Tibial artery (tissue), 4 donors: ENCODE measurements at regions of chr7 and their contacts with region 1.

Region 1: DNA sequence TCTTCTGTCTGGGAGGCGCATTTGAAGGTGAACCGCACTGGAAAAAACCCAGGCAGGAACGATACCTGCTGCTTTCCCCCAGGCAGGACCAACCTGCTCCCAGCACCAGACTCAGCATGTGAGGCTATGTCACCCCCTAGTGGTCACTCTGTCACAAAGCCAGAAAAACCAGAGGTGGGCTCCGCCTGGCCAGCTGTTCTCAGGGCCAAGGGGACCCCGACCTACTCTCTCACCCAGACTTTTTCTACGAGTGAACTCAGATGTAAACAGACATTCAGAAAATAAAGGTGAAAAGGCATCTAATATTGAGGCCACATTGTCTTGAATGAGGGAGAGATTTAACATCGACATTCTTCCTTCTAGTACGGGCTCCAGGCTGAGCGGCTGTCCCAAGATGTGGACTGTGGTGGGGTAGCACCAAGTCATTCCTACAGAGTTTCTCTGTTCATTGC is 117.3 kb downstream of the PRKAG2 start:
- DNase-seq: peak in 1 of 2 donors; percentile 78
- H3K4me3 ChIP-seq: no peak overlapping the region
- H3K27ac ChIP-seq: no peak overlapping the region
- H3K4me1 ChIP-seq: peaks cover 0 to 51% (median 41%) of the 10 kb centered on the region in 4 donors
- H3K27me3 ChIP-seq: no peaks in the 10 kb centered on the region
- CTCF ChIP-seq: peak; percentile 86 to 90

Region 2: DNA sequence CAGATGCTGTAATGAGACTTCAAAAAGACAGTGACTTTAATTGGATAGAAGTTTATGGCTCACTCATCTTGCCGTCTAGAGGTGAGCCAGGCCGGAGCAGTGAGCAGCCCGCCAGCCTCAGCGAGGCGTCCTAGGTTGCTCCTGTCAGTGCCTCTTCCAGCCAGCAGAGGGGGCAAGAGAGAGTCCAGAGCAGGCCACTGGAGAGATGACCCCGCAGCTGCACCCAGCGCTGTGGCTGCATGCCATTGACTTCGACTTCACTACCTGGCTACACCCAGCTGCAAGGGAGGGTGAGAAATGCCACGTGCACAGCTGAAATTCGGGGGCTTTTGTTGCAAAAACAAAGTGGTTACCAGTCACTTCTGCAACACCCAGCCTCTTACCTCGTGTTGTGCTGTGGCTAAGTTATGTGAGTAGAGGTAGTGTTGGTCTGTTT is 391.5 kb before region 1 on chr7:
- intact Hi-C with region 1: loop called (anchors 10 kb)
- DNase-seq: peak; percentile 78 to 88
- H3K4me3 ChIP-seq: no peak overlapping the region
- H3K27ac ChIP-seq: no peak overlapping the region
- H3K4me1 ChIP-seq: peaks cover 0 to 41% (median 29%) of the 10 kb centered on the region in 4 donors
- H3K27me3 ChIP-seq: no peaks in the 10 kb centered on the region
- CTCF ChIP-seq: peak; percentile 96 to 98

Region 3: DNA sequence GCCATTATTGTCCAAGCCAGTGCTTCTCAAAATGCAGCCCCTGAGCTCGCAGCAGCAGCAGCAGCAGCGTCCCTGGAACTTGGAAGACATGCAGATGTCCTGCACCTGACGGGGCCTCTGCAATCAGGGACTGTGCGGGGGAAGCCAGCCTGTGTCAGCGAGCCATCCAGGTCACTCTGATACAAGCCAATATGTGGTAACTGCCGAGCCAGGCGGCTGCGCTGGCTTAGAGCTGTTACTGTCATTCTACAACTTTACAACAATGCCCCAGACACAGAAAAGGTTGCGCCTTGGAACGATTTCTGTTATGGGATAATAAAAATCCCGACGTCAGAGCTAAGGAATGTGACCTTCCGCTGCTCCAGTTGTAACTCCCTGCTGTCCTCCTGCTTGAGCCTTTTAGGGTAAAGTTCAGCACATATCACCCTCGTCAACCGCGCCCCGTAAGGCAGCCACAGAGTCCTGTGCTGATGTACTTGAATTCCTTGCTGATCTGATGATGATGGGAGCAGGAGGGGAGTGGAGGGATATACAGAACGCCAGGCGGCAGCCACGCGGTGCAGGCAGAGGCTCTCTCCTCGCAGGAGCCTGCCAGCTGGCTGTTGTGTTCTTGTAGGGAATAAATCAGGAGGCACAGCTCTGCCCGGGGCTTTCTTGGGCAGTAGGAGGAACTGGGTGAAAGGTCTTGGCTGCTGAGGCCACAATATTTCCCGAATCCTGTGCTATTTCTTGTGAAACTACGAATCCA is 299.7 kb before region 1 on chr7:
- intact Hi-C with region 1: loop called (anchors 5 kb)
- DNase-seq: peak; percentile 93
- H3K4me3 ChIP-seq: peak overlapping the region; percentile 15 to 28
- H3K27ac ChIP-seq: peak overlapping the region; percentile 75
- H3K4me1 ChIP-seq: peaks cover 7 to 26% (median 24%) of the 10 kb centered on the region in 4 donors
- H3K27me3 ChIP-seq: no peaks in the 10 kb centered on the region
- CTCF ChIP-seq: peak; percentile 39 to 47

Region 4: DNA sequence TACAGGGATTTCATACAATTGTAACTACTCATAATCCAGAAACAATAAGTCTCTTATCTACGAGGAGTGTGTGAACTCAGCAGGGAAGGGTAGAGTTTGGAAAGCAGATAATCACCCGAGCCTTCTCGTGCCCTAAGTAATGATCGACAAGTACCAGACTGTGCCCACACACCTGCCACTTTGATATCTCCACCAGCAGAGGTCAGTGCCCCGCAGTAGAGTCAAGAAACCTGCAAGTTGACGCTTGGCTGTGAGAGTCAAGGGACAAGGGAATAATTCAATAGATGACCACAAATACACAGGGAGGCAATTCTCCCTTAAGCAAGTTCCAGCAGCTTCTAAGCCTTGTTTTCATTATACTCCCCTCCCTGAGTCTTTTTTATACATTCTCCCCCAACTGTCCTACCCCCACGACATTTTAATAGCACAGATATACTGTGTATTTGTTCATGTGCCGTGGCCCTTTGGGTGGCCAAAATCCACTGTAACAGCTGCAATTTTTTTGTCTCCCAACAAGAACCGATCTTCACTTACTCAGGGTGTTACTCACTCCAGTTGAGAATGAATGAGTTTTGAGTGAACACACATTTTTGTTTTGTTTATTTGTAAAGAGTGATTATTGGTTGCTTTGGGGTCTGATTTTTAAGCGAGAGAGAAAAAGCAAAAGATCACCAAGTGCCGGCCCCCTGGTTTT is 133.0 kb before region 1 on chr7:
- intact Hi-C with region 1: loop called (anchors 10 kb)
- DNase-seq: no peak
- H3K4me3 ChIP-seq: no peak overlapping the region
- H3K27ac ChIP-seq: no peak overlapping the region
- H3K4me1 ChIP-seq: peaks cover 0 to 73% (median 40%) of the 10 kb centered on the region in 4 donors
- H3K27me3 ChIP-seq: no peaks in the 10 kb centered on the region
- CTCF ChIP-seq: peak; percentile 40 to 43